ENCODE measurements at regions of chr17 and their contacts with region 1.

Region 1: GRCh38 chr17:61399131-61400057 is at the start of gene TBX2:
- DNase-seq: peak; percentile 80
- ATAC-seq: peak; percentile 74
- H3K4me3 ChIP-seq: peak within 1 kb of the TSS; percentile 72 to 93 (median 86)
- H3K27ac ChIP-seq: peak within 1 kb of the TSS; percentile 81
- H3K4me1 ChIP-seq: peaks cover 46% of the 10 kb centered on the region
- H3K27me3 ChIP-seq: no peaks in the 10 kb centered on the region
- CTCF ChIP-seq: peak; percentile 53
- EP300 ChIP-seq: peak in 1 of 2 experiments; percentile 5; a peak in 1 of 4 replicates
- POLR2A ChIP-seq: peak; percentile 26 to 70; a peak in 3 of 4 replicates
- RAD21 ChIP-seq: peak; percentile 67; the same call in 1 of the 2 replicates
- total RNA-seq, gene TBX2: 10.2 and 15.3 TPM in 2 replicates

Region 2: GRCh38 chr17:61354895-61355874 is 44.2 kb before region 1 on chr17:
- CTCF ChIA-PET with region 1: no interaction called
- POLR2A ChIA-PET with region 1: interaction called, 20 read pairs
- in situ Hi-C with region 1: no loop called
- intact Hi-C with region 1: no loop called
- DNase-seq: no peak
- ATAC-seq: peak; percentile 23; the same call in 1 of the 3 replicates
- H3K4me3 ChIP-seq: no peak overlapping the region
- H3K27ac ChIP-seq: no peak overlapping the region
- H3K4me1 ChIP-seq: peaks cover 87% of the 10 kb centered on the region
- H3K27me3 ChIP-seq: no peaks in the 10 kb centered on the region
- CTCF ChIP-seq: peak; percentile 48
- EP300 ChIP-seq: no peak
- POLR2A ChIP-seq: no peak
- RAD21 ChIP-seq: no peak

Region 3: DNA sequence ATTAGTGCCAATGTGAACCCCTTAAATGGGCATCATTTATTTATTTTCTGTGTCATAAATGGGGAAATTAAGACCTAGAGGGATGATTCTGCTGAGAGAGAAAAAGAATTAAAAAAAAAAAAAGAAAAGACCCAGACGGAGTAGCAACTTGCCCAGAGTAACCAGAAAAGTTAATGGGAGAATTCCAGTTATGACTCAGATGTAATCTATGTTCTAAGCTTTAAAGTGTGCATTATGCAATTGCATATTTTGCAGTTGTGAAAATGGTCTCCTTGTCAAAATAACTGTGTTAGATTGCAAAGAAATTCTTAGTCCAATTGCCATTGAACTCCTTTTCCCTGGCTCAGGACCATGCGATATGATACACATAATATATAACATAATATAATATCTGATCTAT is 38.3 kb before region 1 on chr17:
- CTCF ChIA-PET with region 1: no interaction called
- POLR2A ChIA-PET with region 1: interaction called, 56 read pairs
- in situ Hi-C with region 1: no loop called
- intact Hi-C with region 1: loop called (anchors 1 kb)
- DNase-seq: peak; percentile 66
- ATAC-seq: no peak
- H3K4me3 ChIP-seq: no peak overlapping the region
- H3K27ac ChIP-seq: no peak overlapping the region
- H3K4me1 ChIP-seq: peaks cover 99% of the 10 kb centered on the region
- H3K27me3 ChIP-seq: no peaks in the 10 kb centered on the region
- CTCF ChIP-seq: no peak
- EP300 ChIP-seq: peak in 1 of 2 experiments; percentile 63; a peak in 2 of 4 replicates
- POLR2A ChIP-seq: no peak
- RAD21 ChIP-seq: no peak

Region 4: GRCh38 chr17:61383689-61384201 is 15.6 kb before region 1 on chr17:
- CTCF ChIA-PET with region 1: no interaction called
- POLR2A ChIA-PET with region 1: interaction called, 11 read pairs
- in situ Hi-C with region 1: no loop called
- intact Hi-C with region 1: no loop called
- DNase-seq: no peak
- ATAC-seq: no peak
- H3K4me3 ChIP-seq: no peak overlapping the region
- H3K27ac ChIP-seq: no peak overlapping the region
- H3K4me1 ChIP-seq: peaks cover 55% of the 10 kb centered on the region
- H3K27me3 ChIP-seq: no peaks in the 10 kb centered on the region
- CTCF ChIP-seq: no peak
- EP300 ChIP-seq: no peak
- POLR2A ChIP-seq: no peak
- RAD21 ChIP-seq: no peak

Region 5: DNA sequence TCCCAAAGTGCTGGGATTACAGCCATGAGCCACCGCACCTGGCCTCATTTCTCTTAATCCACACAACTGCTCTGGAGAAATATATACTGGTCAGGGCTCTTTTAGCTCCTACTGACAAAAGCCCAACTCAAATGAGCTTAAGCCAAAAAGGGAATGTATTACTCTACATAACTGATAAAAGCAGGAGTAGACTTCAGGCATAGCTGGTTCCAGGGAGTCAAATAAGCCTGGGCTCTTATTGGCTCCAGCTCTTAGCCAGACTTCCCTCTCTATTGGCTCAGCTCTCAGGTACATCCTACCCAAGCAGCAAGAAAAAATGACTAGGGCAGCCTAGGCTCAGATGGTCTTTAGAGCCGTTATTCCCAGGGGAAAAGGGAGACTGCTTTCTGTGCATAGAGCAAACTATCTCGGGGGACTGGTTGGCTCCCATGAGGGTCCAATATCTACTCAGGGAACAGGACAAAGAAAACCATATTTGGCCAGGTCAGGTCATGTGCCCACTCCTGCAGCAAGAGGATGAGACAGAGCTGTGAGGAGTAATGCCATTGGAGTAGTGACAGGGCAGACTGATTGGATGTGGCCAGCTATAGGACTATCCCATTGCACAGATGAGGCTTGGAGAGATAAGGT is 21.5 kb after region 1 on chr17:
- CTCF ChIA-PET with region 1: no interaction called
- POLR2A ChIA-PET with region 1: no interaction called
- in situ Hi-C with region 1: no loop called
- intact Hi-C with region 1: no loop called
- DNase-seq: no peak
- ATAC-seq: no peak
- H3K4me3 ChIP-seq: no peak overlapping the region
- H3K27ac ChIP-seq: no peak overlapping the region
- H3K4me1 ChIP-seq: peaks cover 31% of the 10 kb centered on the region
- H3K27me3 ChIP-seq: no peaks in the 10 kb centered on the region
- CTCF ChIP-seq: no peak
- EP300 ChIP-seq: no peak
- POLR2A ChIP-seq: no peak
- RAD21 ChIP-seq: no peak